ENCODE measurements at regions of chr2 and their contacts with region 1.

Region 1: DNA sequence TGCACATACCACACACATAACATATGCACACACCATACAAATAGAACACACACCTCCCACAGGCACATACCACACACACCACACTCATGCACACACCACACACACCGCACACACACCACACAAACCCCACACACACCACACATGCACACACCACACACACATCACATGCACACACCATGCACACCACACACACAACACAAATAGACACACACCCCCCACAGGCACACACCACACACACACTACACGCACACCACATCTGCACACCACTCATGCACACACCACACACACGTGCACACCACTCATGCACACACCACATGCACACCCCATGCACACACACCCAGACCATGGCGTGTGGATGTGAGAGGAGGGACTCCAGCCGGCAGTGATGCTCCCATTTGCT is 161.7 kb upstream of the TPO start:
- DNase-seq: no peak

Region 2: GRCh38 chr2:1068822-1069221 is 182.7 kb before region 1 on chr2:
- intact Hi-C with region 1: no loop called
- DNase-seq: no peak

Region 3: GRCh38 chr2:1262609-1263008 is 11.1 kb after region 1 on chr2:
- intact Hi-C with region 1: loop called in 1 of 2 experiments (anchors 1 kb)
- DNase-seq: no peak

Region 4: GRCh38 chr2:1282552-1282951 is 31.0 kb after region 1 on chr2:
- intact Hi-C with region 1: no loop called
- DNase-seq: no peak

Region 5: DNA sequence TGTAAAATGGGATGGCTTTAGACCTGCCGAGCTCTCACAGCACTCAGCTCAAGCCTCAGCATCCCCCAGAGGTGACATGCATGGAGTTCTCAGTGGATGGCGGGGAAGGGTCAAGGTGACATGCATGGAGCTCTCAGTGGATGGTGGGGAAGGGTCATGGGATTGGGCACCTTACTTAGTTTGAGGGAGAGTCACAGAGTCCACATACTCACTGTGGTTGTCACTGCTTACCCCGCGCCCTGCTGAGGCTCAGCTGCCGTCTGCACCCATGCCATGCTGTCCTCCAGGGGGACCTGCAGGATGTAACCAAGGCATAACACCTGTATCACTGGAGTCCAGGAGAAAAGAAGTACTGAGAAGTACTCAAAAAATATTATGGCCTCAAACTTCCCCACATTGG is 49.5 kb after region 1 on chr2:
- intact Hi-C with region 1: no loop called
- DNase-seq: no peak

Measured in posterior vena cava (tissue), 2 donors.